CD8-positive, alpha-beta T cell (primary cell): ENCODE measurements at regions of chr7 and their contacts with region 1.

Region 1: DNA sequence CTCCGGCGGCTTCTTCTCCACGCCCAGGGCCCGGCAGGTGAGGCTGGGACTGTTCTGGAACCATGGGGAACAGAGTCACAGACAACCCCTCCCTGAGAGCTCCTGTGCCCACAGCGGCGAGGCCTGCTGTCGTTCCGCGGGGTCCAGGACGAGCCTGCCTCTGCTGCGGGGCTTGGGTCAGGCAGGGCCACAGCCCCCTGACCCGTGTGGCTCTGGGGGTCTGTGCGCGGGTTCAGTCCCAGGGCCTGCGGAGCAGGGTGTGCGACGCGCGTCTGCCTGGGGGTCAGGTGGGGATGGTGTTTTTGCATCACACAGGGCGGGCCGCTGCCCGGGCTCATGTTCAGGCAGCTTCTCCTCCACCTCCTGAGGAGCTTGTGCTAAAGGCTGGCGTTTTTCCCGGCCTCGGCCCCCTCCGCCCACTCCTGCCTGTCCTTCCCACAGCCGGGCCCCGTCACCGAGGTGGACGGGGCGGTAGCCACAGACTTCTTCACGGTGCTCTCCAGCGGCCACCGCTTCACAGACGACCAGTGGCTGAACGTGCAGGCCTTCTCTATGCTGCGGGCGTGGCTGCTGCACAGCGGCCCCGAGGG is 8.4 kb downstream of the AP5Z1 start:
- DNase-seq: peak in 1 of 9 experiments; percentile 20
- ATAC-seq: no peak
- H3K4me3 ChIP-seq: no peak overlapping the region
- H3K4me3 Mint-ChIP-seq: no peak overlapping the region
- H3K27ac ChIP-seq: no peak overlapping the region
- H3K27ac Mint-ChIP-seq: no peak overlapping the region
- H3K4me1 ChIP-seq: no peaks in the 10 kb centered on the region
- H3K4me1 Mint-ChIP-seq: peaks cover 5% of the 10 kb centered on the region
- H3K27me3 ChIP-seq: no peaks in the 10 kb centered on the region
- H3K27me3 Mint-ChIP-seq: no peaks in the 10 kb centered on the region
- CTCF ChIP-seq: no peak

Region 2: GRCh38 chr7:3835109-3835508 is 948.7 kb before region 1 on chr7:
- CTCF ChIA-PET with region 1: no interaction called
- POLR2A ChIA-PET with region 1: no interaction called
- intact Hi-C with region 1: no loop called
- DNase-seq: no peak
- ATAC-seq: no peak
- H3K4me3 ChIP-seq: no peak overlapping the region
- H3K4me3 Mint-ChIP-seq: no peak overlapping the region
- H3K27ac ChIP-seq: no peak overlapping the region
- H3K27ac Mint-ChIP-seq: no peak overlapping the region
- H3K4me1 ChIP-seq: no peaks in the 10 kb centered on the region
- H3K4me1 Mint-ChIP-seq: no peaks in the 10 kb centered on the region
- H3K27me3 ChIP-seq: no peaks in the 10 kb centered on the region
- H3K27me3 Mint-ChIP-seq: peaks cover 5% of the 10 kb centered on the region
- CTCF ChIP-seq: no peak

Region 3: DNA sequence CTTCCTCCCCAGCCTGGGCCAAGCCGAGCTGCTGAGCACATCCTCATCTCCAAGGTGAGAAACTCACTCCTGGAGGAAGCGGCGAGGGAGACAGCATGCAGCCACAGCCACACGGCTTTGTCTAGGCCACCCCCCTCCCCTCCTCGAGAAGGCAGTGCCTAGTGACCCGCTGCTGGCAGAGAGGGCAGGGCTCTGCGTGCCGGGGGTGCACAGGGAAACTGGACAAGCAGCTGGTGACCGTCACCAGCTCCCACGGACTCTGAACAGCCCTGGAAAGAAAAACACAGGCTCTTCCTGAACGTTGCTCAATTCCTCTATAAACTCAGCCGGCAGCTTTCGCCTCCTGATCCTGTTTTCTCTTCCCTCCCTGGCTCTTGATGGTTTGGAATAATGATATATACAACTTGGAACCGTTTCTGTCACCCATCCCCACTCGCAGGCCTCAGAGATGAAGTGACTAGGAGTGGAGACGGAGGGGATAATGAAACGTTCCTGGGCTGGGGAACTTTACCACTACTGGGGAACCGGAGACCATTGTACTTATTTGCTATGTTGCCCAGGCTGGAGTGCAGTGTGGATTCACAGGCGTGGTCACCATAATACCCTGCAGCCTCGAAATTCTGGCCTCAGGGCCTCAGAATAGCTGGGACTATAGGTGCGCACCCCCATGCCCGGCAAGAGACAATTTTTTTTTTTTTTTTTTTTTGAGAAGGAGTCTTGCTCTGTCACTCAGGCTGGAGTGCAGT is 58.6 kb after region 1 on chr7:
- CTCF ChIA-PET with region 1: no interaction called
- POLR2A ChIA-PET with region 1: no interaction called
- intact Hi-C with region 1: no loop called
- DNase-seq: no peak
- ATAC-seq: no peak
- H3K4me3 ChIP-seq: no peak overlapping the region
- H3K4me3 Mint-ChIP-seq: no peak overlapping the region
- H3K27ac ChIP-seq: no peak overlapping the region
- H3K27ac Mint-ChIP-seq: no peak overlapping the region
- H3K4me1 ChIP-seq: no peaks in the 10 kb centered on the region
- H3K4me1 Mint-ChIP-seq: peaks cover 2% of the 10 kb centered on the region
- H3K27me3 ChIP-seq: peaks cover 0 to 2% of the 10 kb centered on the region in 2 experiments
- H3K27me3 Mint-ChIP-seq: peaks cover 17% of the 10 kb centered on the region
- CTCF ChIP-seq: no peak

Region 4: DNA sequence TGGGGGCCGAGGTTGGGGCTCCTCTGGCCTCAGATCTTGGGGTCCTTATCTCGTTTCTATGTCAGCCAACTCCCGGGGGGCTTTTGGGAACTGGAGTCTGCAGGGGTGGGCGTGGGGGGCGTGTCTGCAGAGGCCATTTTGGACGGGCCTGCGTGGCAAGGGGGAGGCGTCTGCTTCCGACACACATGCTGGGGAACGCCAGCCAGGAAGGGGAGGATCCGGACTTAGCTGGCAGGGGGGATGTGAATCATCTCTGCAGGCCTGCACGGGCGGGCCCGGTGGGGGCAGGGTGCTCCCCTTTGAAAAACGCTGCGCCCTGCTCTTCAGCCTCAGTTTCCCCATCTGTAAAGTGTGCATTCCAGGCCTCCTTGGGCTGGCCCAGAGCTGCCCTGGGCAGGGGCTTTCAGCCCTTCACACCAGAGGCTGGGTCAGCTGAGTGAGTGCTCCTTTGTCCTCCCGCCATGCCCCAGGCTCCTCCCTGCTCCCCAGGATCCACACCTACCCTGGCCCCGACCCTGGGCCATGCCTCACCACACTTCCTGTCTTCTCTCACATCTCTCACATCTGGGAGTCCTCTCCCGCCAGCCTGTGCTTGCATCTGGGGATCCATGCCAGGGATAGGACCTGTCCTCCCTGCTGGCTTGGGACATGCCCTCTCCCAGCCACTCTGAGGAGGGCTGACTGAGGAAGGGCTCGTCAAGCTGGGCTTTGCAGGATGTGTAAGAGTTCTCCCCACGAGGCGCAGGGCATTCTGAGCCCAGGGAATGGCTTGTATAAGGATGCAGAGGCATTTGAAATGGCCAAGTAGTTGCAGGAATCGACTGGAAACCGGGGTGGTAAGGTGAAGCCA is 812.4 kb after region 1 on chr7:
- CTCF ChIA-PET with region 1: no interaction called
- POLR2A ChIA-PET with region 1: no interaction called
- intact Hi-C with region 1: loop called in 1 of 2 experiments (anchors 5 kb)
- DNase-seq: peak in 8 of 9 experiments; percentile 51 to 77 (median 64)
- ATAC-seq: peak; percentile 66
- H3K4me3 ChIP-seq: peak overlapping the region in 1 of 2 experiments; percentile 12
- H3K4me3 Mint-ChIP-seq: peak overlapping the region; percentile 74
- H3K27ac ChIP-seq: no peak overlapping the region
- H3K27ac Mint-ChIP-seq: no peak overlapping the region
- H3K4me1 ChIP-seq: peaks cover 33% of the 10 kb centered on the region
- H3K4me1 Mint-ChIP-seq: peaks cover 20% of the 10 kb centered on the region
- H3K27me3 ChIP-seq: peaks cover 19 to 24% of the 10 kb centered on the region in 2 experiments
- H3K27me3 Mint-ChIP-seq: peaks cover 17% of the 10 kb centered on the region
- CTCF ChIP-seq: no peak